Activated CD4-positive, alpha-beta memory T cell treated with anti-CD3 and anti-CD28 coated beads, Interleukin-2, amount 10 ng/mL, durations not matched to agents 7 days and 5 days (primary cell): ENCODE measurements at regions of chr6 and their contacts with region 1.

Region 1: GRCh38 chr6:33271458-33272274 is at the starts of genes RPS18 and VPS52:
- DNase-seq: peak; percentile 93
- H3K4me3 Mint-ChIP-seq: peak within 1 kb of the TSS; percentile 92
- H3K27ac Mint-ChIP-seq: peak within 1 kb of the TSS; percentile 99
- H3K4me1 Mint-ChIP-seq: peaks cover 64% of the 10 kb centered on the region
- H3K27me3 Mint-ChIP-seq: no peaks in the 10 kb centered on the region
- total RNA-seq, gene RPS18: 2,403 to 2,442 TPM
- total RNA-seq, gene VPS52: 53.1 to 59.7 TPM

Region 2: GRCh38 chr6:32637219-32637880 is 634.3 kb before region 1 on chr6 and contains the start of gene HLA-DQA1:
- CTCF ChIA-PET with region 1: no interaction called
- POLR2A ChIA-PET with region 1: no interaction called
- DNase-seq: no peak
- H3K4me3 Mint-ChIP-seq: peak within 1 kb of the TSS; percentile 62
- H3K27ac Mint-ChIP-seq: peak within 1 kb of the TSS; percentile 7
- H3K4me1 Mint-ChIP-seq: peaks cover 38% of the 10 kb centered on the region
- H3K27me3 Mint-ChIP-seq: peaks cover 32% of the 10 kb centered on the region
- total RNA-seq, gene HLA-DQA1: 35.4 to 41.1 TPM

Region 3: GRCh38 chr6:33208091-33208967 is 63.3 kb before region 1 on chr6 and contains the start of gene RING1:
- CTCF ChIA-PET with region 1: interaction called, 3 read pairs
- POLR2A ChIA-PET with region 1: interaction called, 14 read pairs
- DNase-seq: peak; percentile 88
- H3K4me3 Mint-ChIP-seq: peak within 1 kb of the TSS; percentile 80
- H3K27ac Mint-ChIP-seq: peak within 1 kb of the TSS; percentile 79
- H3K4me1 Mint-ChIP-seq: peaks cover 56% of the 10 kb centered on the region
- H3K27me3 Mint-ChIP-seq: peaks cover 10% of the 10 kb centered on the region
- total RNA-seq, gene RING1: 29.7 to 32.1 TPM

Region 4: DNA sequence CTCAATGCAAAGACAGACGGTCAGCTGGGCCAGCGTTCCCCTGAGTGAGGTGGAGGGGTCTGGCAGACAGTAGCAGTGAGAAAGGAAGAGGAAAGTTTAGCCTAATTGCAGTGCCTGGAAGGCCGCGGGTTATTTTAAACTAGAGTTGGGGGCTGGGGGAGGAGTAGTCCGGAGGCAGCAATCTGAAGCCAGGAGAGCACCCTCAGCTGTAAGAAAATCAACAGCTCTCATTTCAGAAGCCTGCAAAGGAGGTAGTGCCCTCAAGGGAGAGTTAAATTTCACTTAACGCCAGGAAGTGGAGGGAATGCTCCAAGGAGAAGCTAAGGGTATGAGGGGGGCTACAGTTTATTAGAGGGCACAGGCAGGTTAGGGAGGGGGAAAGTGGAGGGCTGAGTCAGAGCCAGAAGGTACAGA is 36.4 kb before region 1 on chr6:
- CTCF ChIA-PET with region 1: no interaction called
- POLR2A ChIA-PET with region 1: no interaction called
- DNase-seq: no peak
- H3K4me3 Mint-ChIP-seq: no peak overlapping the region
- H3K27ac Mint-ChIP-seq: no peak overlapping the region
- H3K4me1 Mint-ChIP-seq: no peaks in the 10 kb centered on the region
- H3K27me3 Mint-ChIP-seq: peaks cover 43% of the 10 kb centered on the region

Region 5: DNA sequence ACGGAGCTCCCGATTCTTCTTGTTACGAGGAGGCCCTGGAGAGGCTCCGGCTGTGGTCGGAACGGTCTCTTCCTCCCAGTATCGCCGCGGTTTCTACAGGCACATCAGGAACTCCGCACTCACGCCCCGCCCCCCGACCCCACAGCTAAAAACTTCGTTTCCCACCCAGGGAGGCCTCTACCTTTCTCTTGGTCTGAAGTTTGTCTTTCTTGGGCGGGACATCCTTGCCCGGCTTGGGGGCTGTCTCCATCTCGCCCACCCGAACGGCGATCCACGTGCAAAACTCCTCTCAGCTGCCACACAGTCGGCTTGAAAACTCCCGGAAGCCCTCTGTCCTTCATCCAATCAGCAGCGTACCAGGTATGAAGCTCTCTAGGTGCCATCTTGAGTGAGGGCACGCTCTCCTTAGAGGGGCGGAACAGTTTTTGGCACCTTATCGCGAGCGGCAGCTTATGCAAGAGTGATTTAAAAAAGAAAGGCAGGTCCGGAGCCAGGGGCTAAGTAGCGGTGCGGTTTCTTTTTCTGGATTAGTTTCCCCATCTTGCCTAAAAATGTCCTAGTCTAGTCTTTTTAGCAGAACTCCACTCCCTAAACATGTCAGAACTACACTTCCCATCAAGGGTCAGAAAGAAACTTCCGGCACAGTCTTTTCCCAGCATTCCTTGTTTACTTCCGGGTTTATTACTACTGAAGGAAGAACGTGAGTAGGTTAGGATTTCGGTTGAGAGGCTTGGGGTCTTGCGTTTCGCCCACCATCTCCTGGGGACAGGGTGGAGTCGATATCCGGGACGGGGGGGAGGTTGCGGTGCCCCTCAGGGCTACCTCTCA is 17.5 kb after region 1 on chr6 and contains the starts of genes PFDN6 and WDR46:
- CTCF ChIA-PET with region 1: interaction called, 20 read pairs
- POLR2A ChIA-PET with region 1: interaction called, 234 read pairs
- DNase-seq: peak; percentile 87
- H3K4me3 Mint-ChIP-seq: peak within 1 kb of the TSS; percentile 90
- H3K27ac Mint-ChIP-seq: peak within 1 kb of the TSS; percentile 80
- H3K4me1 Mint-ChIP-seq: peaks cover 47% of the 10 kb centered on the region
- H3K27me3 Mint-ChIP-seq: no peaks in the 10 kb centered on the region
- total RNA-seq, gene PFDN6: 63.5 to 65.0 TPM
- total RNA-seq, gene WDR46: 37.5 to 41.7 TPM

Region 6: GRCh38 chr6:33299237-33299944 is 27.7 kb after region 1 on chr6:
- CTCF ChIA-PET with region 1: interaction called, 16 read pairs
- POLR2A ChIA-PET with region 1: interaction called, 234 read pairs
- DNase-seq: peak; percentile 94
- H3K4me3 Mint-ChIP-seq: peak overlapping the region; percentile 95
- H3K27ac Mint-ChIP-seq: peak overlapping the region; percentile 100
- H3K4me1 Mint-ChIP-seq: peaks cover 41% of the 10 kb centered on the region
- H3K27me3 Mint-ChIP-seq: no peaks in the 10 kb centered on the region

Region 7: GRCh38 chr6:33317669-33318425 is 46.2 kb after region 1 on chr6 and contains the start of gene ZBTB22:
- CTCF ChIA-PET with region 1: interaction called, 7 read pairs
- POLR2A ChIA-PET with region 1: interaction called, 36 read pairs
- DNase-seq: peak; percentile 97
- H3K4me3 Mint-ChIP-seq: peak within 1 kb of the TSS; percentile 87
- H3K27ac Mint-ChIP-seq: peak within 1 kb of the TSS; percentile 95
- H3K4me1 Mint-ChIP-seq: peaks cover 79% of the 10 kb centered on the region
- H3K27me3 Mint-ChIP-seq: no peaks in the 10 kb centered on the region
- total RNA-seq, gene ZBTB22: 16.5 to 18.0 TPM

Region 8: DNA sequence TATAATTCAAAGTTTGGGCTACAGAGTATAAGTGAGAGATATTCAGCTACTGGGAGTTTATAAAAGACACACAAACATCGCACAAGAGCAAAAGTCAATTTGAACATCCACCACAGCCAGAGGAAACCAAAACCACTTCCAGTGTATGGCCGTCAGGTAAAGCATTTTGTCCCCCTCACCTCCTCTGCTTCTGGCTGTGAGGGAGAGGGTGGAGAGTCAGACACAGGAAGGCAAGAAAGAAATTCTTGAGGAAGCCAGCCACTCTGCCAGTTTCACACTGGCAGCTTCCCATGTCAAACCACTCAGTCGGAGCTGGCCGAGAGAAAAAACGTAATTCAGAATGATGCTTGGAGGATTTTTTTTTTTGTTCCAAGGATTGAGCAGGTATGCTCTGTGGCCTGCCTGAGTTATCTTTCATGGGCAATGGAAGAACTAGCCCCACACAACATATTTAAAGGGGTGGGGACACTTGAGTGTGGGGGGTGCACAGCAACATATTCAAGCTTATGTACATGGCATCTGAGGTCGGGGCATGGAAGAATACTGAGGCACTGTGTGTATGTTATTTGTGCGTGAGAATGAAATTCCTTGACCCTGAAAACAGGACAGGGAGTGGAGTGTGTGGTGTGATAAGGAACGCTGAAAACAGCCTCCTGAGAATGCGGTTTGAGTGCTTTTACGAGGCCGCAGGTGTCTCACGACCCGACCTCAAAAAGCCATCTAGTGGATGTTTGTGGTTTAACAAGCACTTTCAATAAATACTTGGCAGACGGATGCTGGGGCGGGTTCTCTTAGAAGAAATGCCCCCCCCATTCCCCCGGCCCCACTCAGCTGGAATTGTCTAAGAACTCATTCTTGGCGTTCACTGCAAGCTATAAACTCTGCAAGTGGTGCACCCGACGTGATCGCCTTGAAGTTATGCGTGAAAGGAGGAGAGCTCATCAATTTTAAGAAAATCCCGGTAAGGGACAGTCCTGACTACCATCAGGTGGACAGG is 73.3 kb after region 1 on chr6:
- CTCF ChIA-PET with region 1: interaction called, 19 read pairs
- POLR2A ChIA-PET with region 1: interaction called, 29 read pairs
- DNase-seq: peak; percentile 79
- H3K4me3 Mint-ChIP-seq: peak overlapping the region; percentile 76
- H3K27ac Mint-ChIP-seq: peak overlapping the region; percentile 97
- H3K4me1 Mint-ChIP-seq: peaks cover 46% of the 10 kb centered on the region
- H3K27me3 Mint-ChIP-seq: peaks cover 2% of the 10 kb centered on the region

Region 9: DNA sequence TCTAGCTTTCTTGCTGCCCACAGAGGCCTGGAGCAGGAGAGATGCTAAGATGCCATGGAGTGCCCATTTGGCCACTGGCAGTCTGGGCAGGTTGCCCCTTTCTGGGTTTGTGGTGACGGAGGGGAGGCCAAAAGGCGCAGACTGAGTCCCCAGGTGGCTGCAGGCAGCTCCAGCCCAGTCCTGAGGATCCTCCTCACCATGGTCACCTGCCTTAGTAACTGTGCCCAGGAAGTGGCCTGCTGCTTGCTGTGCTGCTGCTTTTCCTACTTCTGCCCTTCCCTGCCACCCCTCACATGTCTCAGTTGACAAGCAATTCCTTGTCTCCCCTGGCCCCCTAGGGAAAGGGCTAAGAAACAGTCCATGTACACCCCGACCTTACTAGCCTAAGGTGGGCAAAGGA is 84.6 kb after region 1 on chr6:
- CTCF ChIA-PET with region 1: no interaction called
- POLR2A ChIA-PET with region 1: no interaction called
- DNase-seq: no peak
- H3K4me3 Mint-ChIP-seq: no peak overlapping the region
- H3K27ac Mint-ChIP-seq: no peak overlapping the region
- H3K4me1 Mint-ChIP-seq: no peaks in the 10 kb centered on the region
- H3K27me3 Mint-ChIP-seq: peaks cover 34% of the 10 kb centered on the region

Region 10: DNA sequence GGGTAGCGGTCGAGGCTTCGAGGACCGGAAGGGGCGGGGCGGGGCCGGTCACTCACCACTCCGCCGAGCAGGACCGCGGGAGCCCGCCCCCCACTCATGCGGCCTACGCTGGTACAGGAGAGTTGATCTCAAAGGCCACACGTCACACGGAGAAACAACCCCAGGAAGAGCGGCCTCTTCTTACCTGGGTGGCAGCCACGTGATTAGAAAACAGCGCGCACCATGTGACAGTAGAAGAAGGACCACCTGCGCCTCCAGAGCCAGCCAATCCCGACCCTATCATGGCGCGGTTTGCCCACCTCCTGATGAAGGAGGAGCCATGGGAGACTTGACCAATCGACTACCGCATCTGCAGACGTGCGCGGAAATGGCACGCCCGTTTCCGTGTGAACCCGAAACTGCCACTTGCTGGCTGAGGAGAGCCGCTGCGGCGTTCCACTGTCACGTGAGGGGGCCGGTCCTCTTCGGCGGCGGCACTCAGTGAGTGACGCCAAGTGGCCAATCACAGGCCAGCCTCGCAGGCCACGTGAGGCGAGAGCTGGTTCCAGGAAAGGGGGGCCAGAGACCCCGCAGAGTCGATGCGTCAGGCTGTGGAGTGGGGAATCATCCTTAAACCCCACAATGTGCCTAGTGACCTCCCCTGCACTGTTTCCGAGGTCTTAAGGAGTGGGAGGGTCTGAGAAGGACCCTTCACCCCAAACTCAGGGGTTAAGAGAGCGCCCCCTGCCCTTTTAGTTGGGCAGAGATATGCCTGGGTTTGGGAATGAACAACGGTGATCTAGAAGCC is 146.4 kb after region 1 on chr6 and contains the start of gene CUTA:
- CTCF ChIA-PET with region 1: no interaction called
- POLR2A ChIA-PET with region 1: interaction called, 10 read pairs
- DNase-seq: peak; percentile 99
- H3K4me3 Mint-ChIP-seq: peak within 1 kb of the TSS; percentile 92
- H3K27ac Mint-ChIP-seq: peak within 1 kb of the TSS; percentile 98
- H3K4me1 Mint-ChIP-seq: peaks cover 67% of the 10 kb centered on the region
- H3K27me3 Mint-ChIP-seq: peaks cover 15% of the 10 kb centered on the region
- total RNA-seq, gene CUTA: 243 TPM